SK-N-SH (cell line): ENCODE measurements at regions of chr12 and their contacts with region 1.

Region 1: GRCh38 chr12:10235761-10236631 is 23.3 kb downstream of the GABARAPL1 start:
- DNase-seq: peak; percentile 58
- H3K4me3 ChIP-seq: no peak overlapping the region
- H3K27ac ChIP-seq: no peak overlapping the region
- H3K4me1 ChIP-seq: peaks cover 0 to under 1% of the 10 kb centered on the region in 2 experiments; a peak in 1 of 4 replicates
- H3K27me3 ChIP-seq: no peaks in the 10 kb centered on the region; the same call in 1 of the 2 replicates
- CTCF ChIP-seq: peak; percentile 88
- EP300 ChIP-seq: no peak
- RAD21 ChIP-seq: peak; percentile 88

Region 2: GRCh38 chr12:10052193-10052913 is 183.6 kb before region 1 on chr12:
- CTCF ChIA-PET with region 1: no interaction called
- POLR2A ChIA-PET with region 1: no interaction called
- DNase-seq: no peak
- H3K4me3 ChIP-seq: no peak overlapping the region
- H3K27ac ChIP-seq: no peak overlapping the region
- H3K4me1 ChIP-seq: no peaks in the 10 kb centered on the region
- H3K27me3 ChIP-seq: no peaks in the 10 kb centered on the region; the same call in 1 of the 2 replicates
- CTCF ChIP-seq: no peak
- EP300 ChIP-seq: no peak
- RAD21 ChIP-seq: no peak

Region 3: GRCh38 chr12:10210235-10210634 is 25.8 kb before region 1 on chr12:
- CTCF ChIA-PET with region 1: interaction called, 11 read pairs
- POLR2A ChIA-PET with region 1: no interaction called
- DNase-seq: no peak
- H3K4me3 ChIP-seq: no peak overlapping the region
- H3K27ac ChIP-seq: no peak overlapping the region
- H3K4me1 ChIP-seq: no peaks in the 10 kb centered on the region; a peak in 1 of 4 replicates
- H3K27me3 ChIP-seq: peaks cover 16% of the 10 kb centered on the region; the same call in 1 of the 2 replicates
- CTCF ChIP-seq: no peak
- EP300 ChIP-seq: no peak
- RAD21 ChIP-seq: no peak

Region 4: DNA sequence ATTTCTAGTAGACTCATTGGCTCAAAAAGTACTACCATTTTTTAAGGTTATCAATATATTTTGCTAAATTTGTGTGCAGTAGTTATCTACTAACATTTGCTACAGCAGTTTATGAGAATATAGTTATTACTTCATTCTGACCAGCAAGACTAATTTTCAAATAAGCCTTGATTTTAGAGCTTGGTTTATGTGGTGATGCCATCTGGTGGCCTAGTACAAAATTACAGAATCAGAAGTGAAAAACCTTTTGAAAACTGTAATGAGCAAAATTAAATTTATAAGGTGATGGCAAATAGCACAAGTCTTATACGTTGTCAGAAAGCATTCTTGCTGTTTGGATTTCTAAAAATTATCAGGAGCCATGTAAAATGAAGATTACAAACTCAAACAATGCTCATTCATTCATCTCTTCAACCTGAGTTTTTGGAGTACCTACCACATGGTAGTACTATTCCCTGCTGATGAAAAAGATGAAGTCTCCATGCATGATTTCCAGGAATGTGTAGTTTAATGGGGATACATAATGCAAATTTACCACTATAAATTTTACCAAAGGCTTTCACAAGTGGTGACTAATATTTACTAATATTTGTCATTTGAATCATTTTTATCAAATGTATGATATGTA is 326.4 kb after region 1 on chr12:
- CTCF ChIA-PET with region 1: interaction called, 55 read pairs
- POLR2A ChIA-PET with region 1: no interaction called
- DNase-seq: peak; percentile 20
- H3K4me3 ChIP-seq: no peak overlapping the region; a peak in 1 of 4 replicates
- H3K27ac ChIP-seq: no peak overlapping the region
- H3K4me1 ChIP-seq: no peaks in the 10 kb centered on the region
- H3K27me3 ChIP-seq: peaks cover 13% of the 10 kb centered on the region; the same call in 1 of the 2 replicates
- CTCF ChIP-seq: peak; percentile 80
- EP300 ChIP-seq: no peak
- RAD21 ChIP-seq: peak; percentile 76